Breast epithelium (tissue), 4 donors: ENCODE measurements at regions of chr11 and their contacts with region 1.

Region 1: DNA sequence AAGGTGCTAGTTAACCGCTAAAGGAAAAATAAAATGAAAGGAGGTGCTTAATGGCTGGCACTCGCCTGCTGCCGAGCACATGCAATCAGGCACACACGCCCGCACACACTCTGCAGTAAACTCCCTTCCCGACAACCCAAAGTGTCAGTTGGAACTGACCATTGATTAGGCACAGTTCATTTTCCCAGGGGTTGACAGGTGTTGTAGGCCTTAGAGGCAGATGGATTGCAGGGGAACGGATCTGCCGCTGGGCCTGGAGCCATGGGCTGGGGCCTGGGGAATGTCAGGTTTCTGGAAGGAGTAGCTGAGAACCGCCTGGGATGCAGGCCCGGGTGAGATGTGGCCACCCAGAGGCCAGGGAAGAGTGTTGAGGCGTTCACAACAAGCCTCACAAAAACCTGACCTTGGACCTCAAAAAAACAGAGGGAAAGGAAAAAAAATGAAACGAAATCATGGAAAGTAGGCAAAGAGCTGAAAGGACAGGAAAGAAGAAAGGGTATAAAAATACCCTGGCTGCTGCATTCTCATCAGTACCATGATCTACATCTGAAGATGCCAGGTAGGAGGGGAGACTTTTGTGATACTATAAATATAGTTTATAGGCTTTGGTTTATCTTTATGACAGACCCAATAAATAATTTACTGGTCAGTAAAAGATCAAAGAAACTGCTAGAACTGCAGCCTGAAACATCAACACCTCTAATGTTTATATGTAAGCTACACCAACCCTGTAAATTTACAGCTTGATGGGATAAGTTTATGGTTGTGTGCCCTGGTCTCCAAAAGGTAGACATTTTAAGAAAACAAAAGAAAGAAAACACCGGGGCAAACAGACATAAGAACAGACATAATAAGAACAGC is 313.4 kb downstream of the BUD13 start:
- DNase-seq: no peak
- H3K4me3 ChIP-seq: no peak overlapping the region
- H3K27ac ChIP-seq: no peak overlapping the region
- H3K4me1 ChIP-seq: no peaks in the 10 kb centered on the region
- H3K27me3 ChIP-seq: peaks cover 0 to 17% of the 10 kb centered on the region in 2 donors
- CTCF ChIP-seq: no peak
- POLR2A ChIP-seq: no peak

Region 2: DNA sequence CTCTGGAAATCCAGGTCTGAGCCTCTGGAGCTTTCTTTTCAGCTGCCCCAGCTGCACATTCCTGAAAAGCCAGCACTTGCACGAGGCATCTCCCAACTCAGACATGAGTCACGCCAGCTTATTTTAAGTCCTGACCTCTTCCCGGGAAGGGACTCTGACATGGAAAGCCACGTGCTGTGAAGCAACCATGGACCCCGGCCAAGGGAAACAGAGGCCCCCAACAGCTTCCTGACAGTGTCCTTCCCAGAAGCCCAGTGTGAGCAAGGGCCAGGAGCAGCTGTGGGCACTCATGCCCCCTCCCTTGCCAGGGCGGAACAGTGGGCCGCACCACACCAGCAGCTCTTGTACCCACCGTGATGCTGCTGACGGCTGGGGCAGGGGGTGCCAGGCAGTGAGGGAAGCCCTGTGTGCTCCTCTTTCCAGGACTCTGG is 836.4 kb before region 1 on chr11:
- intact Hi-C with region 1: loop called (anchors 5 kb)
- DNase-seq: peak in 1 of 2 donors; percentile 45
- H3K4me3 ChIP-seq: no peak overlapping the region
- H3K27ac ChIP-seq: no peak overlapping the region
- H3K4me1 ChIP-seq: no peaks in the 10 kb centered on the region
- H3K27me3 ChIP-seq: no peaks in the 10 kb centered on the region
- CTCF ChIP-seq: no peak
- POLR2A ChIP-seq: no peak